ENCODE measurements at regions of chr1 and their contacts with region 1.

Region 1: DNA sequence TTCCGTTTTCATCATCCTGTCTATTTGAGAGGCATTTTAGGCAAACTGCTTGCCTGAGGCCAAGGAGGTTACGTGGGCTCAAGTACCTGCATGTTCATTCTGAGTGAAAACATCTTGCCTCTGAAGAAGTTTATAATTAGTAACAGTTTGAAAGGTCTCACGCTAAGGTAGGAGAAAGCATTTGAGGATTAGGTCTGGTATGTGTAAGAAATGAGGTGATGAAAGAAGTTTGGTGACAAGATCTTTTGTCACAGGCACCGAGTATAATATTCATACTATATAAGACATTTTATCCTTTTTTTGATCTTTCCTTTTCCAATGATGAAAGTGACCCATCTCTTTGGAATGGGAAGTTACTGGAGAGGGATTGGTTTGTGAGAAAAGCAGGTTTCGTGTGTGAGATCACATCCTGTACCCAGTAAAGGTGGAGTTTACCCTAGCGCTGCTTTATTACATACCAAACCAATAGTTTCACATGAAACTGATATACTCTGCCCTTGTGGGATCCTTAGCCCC is 98.7 kb upstream of the PDC start:
- DNase-seq: no peak
- ATAC-seq: no peak
- H3K4me3 Mint-ChIP-seq: no peak overlapping the region
- H3K27ac Mint-ChIP-seq: no peak overlapping the region
- H3K4me1 Mint-ChIP-seq: no peaks in the 10 kb centered on the region
- H3K27me3 Mint-ChIP-seq: peaks cover 4% of the 10 kb centered on the region

Region 2: GRCh38 chr1:186611156-186611555 is 51.5 kb after region 1 on chr1:
- CTCF ChIA-PET with region 1: no interaction called
- POLR2A ChIA-PET with region 1: no interaction called
- intact Hi-C with region 1: loop called in 1 of 2 experiments (anchors 5 kb)
- DNase-seq: no peak
- ATAC-seq: no peak
- H3K4me3 Mint-ChIP-seq: no peak overlapping the region
- H3K27ac Mint-ChIP-seq: no peak overlapping the region
- H3K4me1 Mint-ChIP-seq: peaks cover 19% of the 10 kb centered on the region
- H3K27me3 Mint-ChIP-seq: peaks cover 8% of the 10 kb centered on the region

Measured in activated CD4-positive, alpha-beta T cell treated with anti-CD3 and anti-CD28 coated beads for 36 hours (primary cell).